ENCODE measurements at regions of chr4 and their contacts with region 1.

Region 1: GRCh38 chr4:76703123-76703490 is 194.8 kb downstream of the SOWAHB start:
- DNase-seq: peak; percentile 64 to 74
- H3K4me3 ChIP-seq: no peak overlapping the region
- H3K4me3 Mint-ChIP-seq: peak overlapping the region; percentile 37
- H3K27ac Mint-ChIP-seq: peak overlapping the region; percentile 95
- H3K4me1 ChIP-seq: peaks cover 65% of the 10 kb centered on the region
- H3K4me1 Mint-ChIP-seq: peaks cover 40% of the 10 kb centered on the region
- H3K27me3 ChIP-seq: no peaks in the 10 kb centered on the region
- H3K27me3 Mint-ChIP-seq: no peaks in the 10 kb centered on the region
- CTCF ChIP-seq: no peak

Region 2: DNA sequence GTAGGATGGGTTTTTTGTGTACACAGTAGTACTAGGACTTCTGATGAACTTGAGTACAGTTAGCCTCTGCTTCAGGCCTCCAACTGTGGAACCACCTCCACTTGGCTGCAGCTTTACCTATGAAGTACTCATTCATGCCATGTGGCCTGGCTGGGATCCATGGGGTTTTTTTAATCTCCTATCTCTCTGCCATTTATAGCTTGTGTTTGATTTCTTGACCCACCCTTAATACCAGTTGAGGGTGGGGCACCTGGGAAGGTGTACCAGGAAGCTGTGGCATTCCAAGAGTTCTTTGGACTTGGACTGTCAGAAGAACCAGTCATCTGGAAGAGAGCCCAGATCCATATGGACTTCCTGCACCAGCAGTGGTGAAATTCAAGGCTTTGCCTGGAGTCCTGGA is 38.0 kb before region 1 on chr4:
- CTCF ChIA-PET with region 1: no interaction called
- POLR2A ChIA-PET with region 1: no interaction called
- intact Hi-C with region 1: loop called (anchors 1 kb)
- DNase-seq: peak in 1 of 2 experiments; percentile 47
- H3K4me3 ChIP-seq: no peak overlapping the region
- H3K4me3 Mint-ChIP-seq: no peak overlapping the region
- H3K27ac Mint-ChIP-seq: peak overlapping the region; percentile 43
- H3K4me1 ChIP-seq: peaks cover 49% of the 10 kb centered on the region
- H3K4me1 Mint-ChIP-seq: peaks cover 18% of the 10 kb centered on the region
- H3K27me3 ChIP-seq: no peaks in the 10 kb centered on the region
- H3K27me3 Mint-ChIP-seq: no peaks in the 10 kb centered on the region
- CTCF ChIP-seq: no peak

Region 3: GRCh38 chr4:76690011-76690905 is 12.8 kb before region 1 on chr4:
- CTCF ChIA-PET with region 1: no interaction called
- POLR2A ChIA-PET with region 1: no interaction called
- intact Hi-C with region 1: loop called (anchors 1 kb)
- DNase-seq: no peak
- H3K4me3 ChIP-seq: peak overlapping the region; percentile 65
- H3K4me3 Mint-ChIP-seq: peak overlapping the region; percentile 78
- H3K27ac Mint-ChIP-seq: peak overlapping the region; percentile 81
- H3K4me1 ChIP-seq: peaks cover 40% of the 10 kb centered on the region
- H3K4me1 Mint-ChIP-seq: peaks cover 13% of the 10 kb centered on the region
- H3K27me3 ChIP-seq: no peaks in the 10 kb centered on the region
- H3K27me3 Mint-ChIP-seq: no peaks in the 10 kb centered on the region
- CTCF ChIP-seq: no peak